ENCODE measurements at regions of chr19 and their contacts with region 1.

Region 1: GRCh38 chr19:17859533-17860330 is at the start of gene RPL18A:
- DNase-seq: peak; percentile 99
- ATAC-seq: peak; percentile 92
- H3K4me3 Mint-ChIP-seq: peak within 1 kb of the TSS; percentile 99
- H3K27ac Mint-ChIP-seq: peak within 1 kb of the TSS; percentile 97
- H3K4me1 Mint-ChIP-seq: peaks cover 21% of the 10 kb centered on the region
- H3K27me3 Mint-ChIP-seq: peaks cover 5% of the 10 kb centered on the region
- CTCF ChIP-seq: no peak
- total RNA-seq, gene RPL18A: 2,950 to 3,448 TPM (median 3,445 TPM) in 3 replicates

Region 2: GRCh38 chr19:17830567-17831418 is 28.9 kb before region 1 on chr19:
- CTCF ChIA-PET with region 1: interaction called, 35 read pairs
- POLR2A ChIA-PET with region 1: interaction called, 9 read pairs
- DNase-seq: peak; percentile 98
- ATAC-seq: peak; percentile 84
- H3K4me3 Mint-ChIP-seq: peak overlapping the region; percentile 83
- H3K27ac Mint-ChIP-seq: peak overlapping the region; percentile 99
- H3K4me1 Mint-ChIP-seq: peaks cover 26% of the 10 kb centered on the region
- H3K27me3 Mint-ChIP-seq: peaks cover 20% of the 10 kb centered on the region
- CTCF ChIP-seq: no peak

Region 3: DNA sequence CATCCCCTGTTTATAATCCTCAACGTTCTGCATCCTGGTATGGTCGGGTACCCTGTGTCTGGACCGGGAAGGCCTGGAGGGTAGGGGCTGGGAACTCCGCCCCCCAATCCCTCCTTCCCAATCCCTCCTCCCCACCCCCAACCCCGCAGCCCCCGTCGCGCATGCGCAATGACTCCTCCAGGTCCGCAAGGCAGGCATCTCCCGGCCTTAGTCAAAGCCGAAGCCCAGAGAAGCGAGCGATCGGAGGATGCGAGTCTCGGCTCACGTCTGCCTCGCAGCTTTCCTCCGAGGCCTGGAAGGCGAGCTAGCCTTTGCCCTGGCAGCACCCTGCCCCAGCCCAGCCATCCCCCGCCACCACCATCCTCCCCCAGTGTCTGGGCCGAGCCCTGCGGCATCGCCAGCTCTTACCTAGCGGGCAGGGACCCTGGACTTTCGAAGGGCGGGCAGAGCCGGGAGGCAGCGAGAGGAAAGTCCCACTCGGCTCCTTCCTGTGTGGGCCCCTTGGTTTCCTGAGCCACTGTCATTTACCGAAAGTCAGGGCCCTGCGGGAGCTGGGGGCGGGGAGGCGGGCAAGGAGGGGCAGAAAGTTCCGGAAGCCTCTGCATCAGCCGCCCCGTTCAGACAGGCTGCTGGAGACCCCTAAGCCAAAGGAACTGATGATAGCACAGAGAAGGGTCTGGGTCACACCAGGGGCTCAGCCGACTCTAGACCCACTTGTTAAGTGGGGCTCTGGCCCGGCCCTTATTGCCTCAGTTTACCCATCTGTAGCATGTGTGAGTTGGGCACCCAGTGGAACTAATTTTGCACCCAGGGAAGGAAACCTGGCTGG is 12.0 kb before region 1 on chr19 and contains the start of gene JAK3:
- CTCF ChIA-PET with region 1: interaction called, 33 read pairs
- POLR2A ChIA-PET with region 1: interaction called, 9 read pairs
- DNase-seq: peak; percentile 90
- ATAC-seq: peak; percentile 84
- H3K4me3 Mint-ChIP-seq: peak within 1 kb of the TSS; percentile 49; the same call in 1 of the 2 replicates
- H3K27ac Mint-ChIP-seq: no peak within 1 kb of the TSS; the same call in 1 of the 2 replicates
- H3K4me1 Mint-ChIP-seq: no peaks in the 10 kb centered on the region
- H3K27me3 Mint-ChIP-seq: peaks cover 43% of the 10 kb centered on the region
- CTCF ChIP-seq: no peak
- total RNA-seq, gene JAK3: 4.4 to 5.6 TPM (median 5.6 TPM) in 3 replicates

Region 4: GRCh38 chr19:17932485-17933338 is 73.0 kb after region 1 on chr19 and contains the start of gene CCDC124:
- CTCF ChIA-PET with region 1: interaction called, 148 read pairs
- POLR2A ChIA-PET with region 1: interaction called, 41 read pairs
- DNase-seq: peak; percentile 94
- ATAC-seq: peak; percentile 85
- H3K4me3 Mint-ChIP-seq: peak within 1 kb of the TSS; percentile 88
- H3K27ac Mint-ChIP-seq: peak within 1 kb of the TSS; percentile 99
- H3K4me1 Mint-ChIP-seq: peaks cover 15% of the 10 kb centered on the region
- H3K27me3 Mint-ChIP-seq: no peaks in the 10 kb centered on the region; the same call in 1 of the 2 replicates
- CTCF ChIP-seq: peak; percentile 54
- total RNA-seq, gene CCDC124: 152 to 159 TPM (median 156 TPM) in 3 replicates

Region 5: DNA sequence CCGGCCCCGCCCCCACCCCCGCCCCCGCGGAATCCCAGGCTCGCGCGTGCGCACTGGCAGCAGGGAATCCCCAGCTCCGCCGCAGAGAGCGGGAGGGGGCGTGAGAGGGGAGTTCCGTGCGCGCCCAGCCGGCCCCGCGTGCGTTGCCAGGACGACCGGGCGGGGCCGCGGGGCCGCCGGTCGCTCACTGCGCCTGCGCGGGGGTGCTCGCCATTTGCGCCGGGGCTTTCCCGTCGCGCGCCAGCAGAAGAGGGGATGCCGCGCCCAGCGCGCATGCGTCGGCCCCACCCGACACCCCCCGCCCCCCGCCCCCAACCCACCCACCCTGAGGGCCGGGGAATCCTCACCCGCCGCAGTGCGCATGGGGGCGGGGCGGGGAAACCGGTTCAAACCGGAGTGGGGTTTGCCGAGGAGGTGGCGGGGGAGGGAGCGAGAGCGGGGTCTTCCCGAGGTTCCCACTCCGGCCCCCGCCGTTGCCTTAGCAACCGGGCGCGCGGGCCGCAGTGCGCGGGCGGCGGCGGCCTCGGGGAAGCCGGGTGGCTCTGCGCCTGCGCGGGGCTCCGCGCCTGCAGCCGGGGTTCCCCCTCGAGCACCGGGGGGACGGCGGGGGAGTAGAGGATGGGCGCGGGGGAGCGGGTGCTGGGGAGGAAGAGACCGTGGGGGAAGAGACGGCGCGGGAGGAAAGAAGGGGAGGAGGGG is 88.2 kb after region 1 on chr19:
- CTCF ChIA-PET with region 1: interaction called, 10 read pairs
- POLR2A ChIA-PET with region 1: interaction called, 7 read pairs
- DNase-seq: peak; percentile 97
- ATAC-seq: peak; percentile 27
- H3K4me3 Mint-ChIP-seq: peak overlapping the region; percentile 77
- H3K27ac Mint-ChIP-seq: no peak overlapping the region
- H3K4me1 Mint-ChIP-seq: peaks cover 28% of the 10 kb centered on the region
- H3K27me3 Mint-ChIP-seq: peaks cover 41% of the 10 kb centered on the region
- CTCF ChIP-seq: no peak

Region 6: GRCh38 chr19:17985037-17985818 is 125.5 kb after region 1 on chr19:
- CTCF ChIA-PET with region 1: no interaction called
- POLR2A ChIA-PET with region 1: no interaction called
- DNase-seq: no peak
- ATAC-seq: peak; percentile 53; the same call in 1 of the 2 replicates
- H3K4me3 Mint-ChIP-seq: no peak overlapping the region
- H3K27ac Mint-ChIP-seq: peak overlapping the region; percentile 53; the same call in 1 of the 2 replicates
- H3K4me1 Mint-ChIP-seq: peaks cover 5% of the 10 kb centered on the region
- H3K27me3 Mint-ChIP-seq: no peaks in the 10 kb centered on the region
- CTCF ChIP-seq: no peak

Region 7: DNA sequence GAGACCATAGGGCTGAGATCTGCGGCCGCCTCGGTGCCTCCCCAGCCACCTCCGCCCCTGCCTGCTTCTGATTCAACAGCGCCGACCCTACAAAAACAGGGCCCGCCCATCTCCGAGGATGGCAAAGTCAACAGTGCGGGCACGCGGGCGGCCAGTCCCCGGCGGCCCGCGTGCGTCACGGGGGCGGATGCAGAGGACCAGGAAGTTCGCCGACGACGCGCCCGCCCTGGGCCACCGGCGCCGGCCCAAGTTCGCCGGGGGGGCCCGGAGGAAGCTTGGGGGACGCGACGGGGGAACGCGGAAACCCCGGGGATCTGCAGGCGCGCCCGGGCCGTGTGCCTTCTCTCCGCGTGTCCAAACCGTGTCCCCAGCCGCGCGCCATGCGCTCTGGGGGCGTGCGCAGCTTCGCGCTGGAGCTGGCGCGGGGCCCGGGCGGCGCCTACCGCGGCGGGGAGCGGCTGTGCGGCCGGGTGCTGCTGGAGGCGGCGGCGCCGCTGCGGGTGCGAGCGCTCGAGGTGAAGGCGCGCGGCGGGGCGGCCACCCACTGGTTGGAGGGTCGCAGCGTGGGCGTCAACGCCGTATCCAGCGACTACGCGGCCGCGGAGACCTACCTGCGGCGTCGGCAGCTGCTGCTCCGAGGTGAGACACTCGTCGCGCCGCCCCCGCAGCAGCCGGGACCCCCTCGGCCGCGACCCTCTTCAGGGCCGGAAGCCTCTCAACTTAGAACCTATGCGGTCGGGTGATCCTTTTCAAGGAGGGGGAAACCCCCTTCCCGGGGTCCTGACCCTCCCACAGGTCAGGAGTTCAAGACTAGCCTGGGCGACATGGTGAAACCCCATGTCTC is 141.4 kb after region 1 on chr19:
- CTCF ChIA-PET with region 1: interaction called, 38 read pairs
- POLR2A ChIA-PET with region 1: no interaction called
- DNase-seq: peak; percentile 63
- ATAC-seq: peak; percentile 39
- H3K4me3 Mint-ChIP-seq: peak overlapping the region; percentile 71
- H3K27ac Mint-ChIP-seq: no peak overlapping the region
- H3K4me1 Mint-ChIP-seq: peaks cover 6% of the 10 kb centered on the region
- H3K27me3 Mint-ChIP-seq: peaks cover 49% of the 10 kb centered on the region
- CTCF ChIP-seq: no peak

Measured in WTC11 (cell line).